Esophagus squamous epithelium (tissue), 5 donors: ENCODE measurements at regions of chr12 and their contacts with region 1.

Region 1: DNA sequence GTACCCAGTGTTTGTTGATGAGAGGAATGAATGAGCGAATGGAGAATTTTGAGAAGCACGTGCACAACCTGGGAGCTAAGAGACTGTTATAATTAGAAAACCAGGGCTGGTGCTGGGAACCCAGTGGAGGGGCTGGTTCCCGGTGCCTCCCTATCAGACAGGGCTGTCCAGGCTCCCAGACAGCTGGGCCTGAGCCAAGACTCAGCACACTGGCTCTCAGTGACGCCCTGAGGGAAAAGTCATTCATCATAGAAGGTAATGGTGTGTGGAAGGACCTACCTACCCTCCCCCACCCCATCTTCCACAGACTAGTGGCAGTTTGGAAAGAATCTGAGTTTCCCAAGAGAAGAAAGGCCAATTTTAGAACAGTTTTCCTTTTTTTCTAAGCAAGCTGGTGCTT is 34.7 kb downstream of the KCNA5 start:
- DNase-seq: no peak
- H3K4me3 ChIP-seq: no peak overlapping the region
- H3K27ac ChIP-seq: no peak overlapping the region
- H3K4me1 ChIP-seq: peaks cover 0 to 12% (median 0%) of the 10 kb centered on the region in 3 donors
- H3K27me3 ChIP-seq: peaks cover 0 to 80% (median 0%) of the 10 kb centered on the region in 4 donors
- CTCF ChIP-seq: no peak
- POLR2A ChIP-seq: no peak

Region 2: DNA sequence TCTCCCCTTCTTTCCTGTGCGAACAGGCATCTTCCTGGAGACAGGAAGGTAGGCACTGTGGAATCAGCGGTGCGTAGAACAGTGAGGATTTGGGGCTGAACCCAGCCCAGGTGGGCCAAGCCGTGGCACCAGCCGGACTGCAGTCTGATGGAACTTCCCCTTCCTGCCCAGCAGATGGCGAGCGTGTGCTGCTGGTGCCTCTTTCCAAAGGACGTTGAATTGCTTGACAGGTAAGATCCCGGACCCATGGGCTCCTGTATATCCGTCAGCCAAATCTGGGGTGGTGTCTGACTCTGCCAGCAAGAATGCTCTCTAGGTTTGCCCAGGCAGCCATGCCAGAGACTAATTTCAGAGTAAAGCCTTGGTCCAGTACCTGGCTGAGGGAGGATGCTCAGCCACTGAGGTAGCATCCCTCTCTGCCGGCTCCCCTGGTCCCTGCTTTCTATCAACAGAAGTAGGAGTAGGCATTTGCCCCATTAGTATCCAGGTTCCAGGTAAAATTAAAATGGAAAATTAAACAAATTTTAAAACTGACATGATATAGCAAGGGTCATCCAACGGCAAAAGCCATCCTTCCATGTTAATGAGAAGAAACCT is 55.9 kb before region 1 on chr12:
- intact Hi-C with region 1: loop called (anchors 5 kb)
- DNase-seq: no peak
- H3K4me3 ChIP-seq: no peak overlapping the region
- H3K27ac ChIP-seq: no peak overlapping the region
- H3K4me1 ChIP-seq: peaks cover 0 to 12% (median 0%) of the 10 kb centered on the region in 3 donors
- H3K27me3 ChIP-seq: peaks cover 0 to 52% (median 0%) of the 10 kb centered on the region in 4 donors
- CTCF ChIP-seq: peak; percentile 78 to 85 (median 81)
- POLR2A ChIP-seq: no peak

Region 3: DNA sequence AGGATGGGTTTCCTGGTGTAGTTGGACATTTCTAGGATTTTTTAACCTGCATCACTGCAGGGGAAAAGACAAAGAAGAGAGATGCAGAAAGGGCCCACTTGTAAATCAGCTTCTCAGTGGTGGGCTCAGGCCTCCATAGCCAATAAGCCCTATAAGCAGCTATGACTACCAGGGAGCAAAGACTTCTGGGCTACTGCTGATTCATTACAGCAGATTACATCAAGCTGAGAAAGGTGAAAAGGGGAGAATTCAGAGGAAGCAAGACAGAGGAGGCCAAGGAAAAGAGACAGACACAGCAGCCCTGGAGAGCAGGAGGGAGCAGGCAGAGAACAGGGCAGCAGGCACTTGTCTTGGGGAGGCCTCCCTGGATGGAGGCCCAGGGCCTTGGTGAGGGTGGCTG is 60.4 kb after region 1 on chr12:
- intact Hi-C with region 1: no loop called
- DNase-seq: no peak
- H3K4me3 ChIP-seq: no peak overlapping the region
- H3K27ac ChIP-seq: no peak overlapping the region
- H3K4me1 ChIP-seq: peaks cover 0 to 57% (median 14%) of the 10 kb centered on the region in 3 donors
- H3K27me3 ChIP-seq: no peaks in the 10 kb centered on the region
- CTCF ChIP-seq: no peak
- POLR2A ChIP-seq: no peak